Activated naive CD4-positive, alpha-beta T cell treated with anti-CD3 and anti-CD28 coated beads for 36 hours (primary cell): ENCODE measurements at regions of chr9 and their contacts with region 1.

Region 1: GRCh38 chr9:99259231-99259918 is 37.3 kb downstream of the SEC61B start:
- DNase-seq: peak; percentile 73
- H3K4me3 Mint-ChIP-seq: no peak overlapping the region
- H3K27ac Mint-ChIP-seq: no peak overlapping the region
- H3K4me1 Mint-ChIP-seq: peaks cover 17% of the 10 kb centered on the region
- H3K27me3 Mint-ChIP-seq: peaks cover 17% of the 10 kb centered on the region

Region 2: DNA sequence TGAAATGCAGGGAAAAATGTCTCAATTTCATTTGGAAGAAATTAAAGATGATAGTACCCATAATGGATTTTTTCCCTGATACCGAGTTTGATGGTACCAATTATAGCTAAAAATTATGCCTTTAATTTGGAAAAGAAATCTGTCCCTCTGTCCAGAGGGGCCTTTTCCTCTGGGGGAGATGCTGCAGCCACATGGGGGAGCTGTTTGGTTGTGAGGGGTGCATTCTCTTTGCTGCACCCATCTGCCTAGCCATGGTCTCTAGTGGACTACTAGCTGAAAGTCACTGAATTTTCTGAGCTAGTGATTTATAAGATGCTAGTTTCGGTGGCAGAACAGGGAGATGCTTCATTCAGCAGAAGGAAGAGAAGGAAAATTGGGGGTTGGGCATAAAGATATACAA is 27.7 kb before region 1 on chr9:
- CTCF ChIA-PET with region 1: interaction called, 11 read pairs
- intact Hi-C with region 1: no loop called
- DNase-seq: peak; percentile 69
- H3K4me3 Mint-ChIP-seq: no peak overlapping the region
- H3K27ac Mint-ChIP-seq: no peak overlapping the region
- H3K4me1 Mint-ChIP-seq: peaks cover 10% of the 10 kb centered on the region
- H3K27me3 Mint-ChIP-seq: no peaks in the 10 kb centered on the region